Naive thymus-derived CD4-positive, alpha-beta T cell (primary cell): ENCODE measurements at regions of chr7 and their contacts with region 1.

Region 1: GRCh38 chr7:130961128-130961601 is 227.2 kb upstream of the KLF14 start:
- DNase-seq: peak; percentile 37 to 88 (median 79)
- ATAC-seq: peak; percentile 87
- H3K4me3 ChIP-seq: peak overlapping the region; percentile 65
- H3K4me3 Mint-ChIP-seq: peak overlapping the region; percentile 87 to 98 (median 90)
- H3K27ac ChIP-seq: peak overlapping the region; percentile 80
- H3K27ac Mint-ChIP-seq: peak overlapping the region in 8 of 9 donors; percentile 94 to 100 (median 97)
- H3K4me1 ChIP-seq: peaks cover 50 to 60% of the 10 kb centered on the region in 2 donors
- H3K4me1 Mint-ChIP-seq: peaks cover 53 to 76% (median 69%) of the 10 kb centered on the region in 7 donors
- H3K27me3 ChIP-seq: no peaks in the 10 kb centered on the region
- H3K27me3 Mint-ChIP-seq: no peaks in the 10 kb centered on the region

Region 2: DNA sequence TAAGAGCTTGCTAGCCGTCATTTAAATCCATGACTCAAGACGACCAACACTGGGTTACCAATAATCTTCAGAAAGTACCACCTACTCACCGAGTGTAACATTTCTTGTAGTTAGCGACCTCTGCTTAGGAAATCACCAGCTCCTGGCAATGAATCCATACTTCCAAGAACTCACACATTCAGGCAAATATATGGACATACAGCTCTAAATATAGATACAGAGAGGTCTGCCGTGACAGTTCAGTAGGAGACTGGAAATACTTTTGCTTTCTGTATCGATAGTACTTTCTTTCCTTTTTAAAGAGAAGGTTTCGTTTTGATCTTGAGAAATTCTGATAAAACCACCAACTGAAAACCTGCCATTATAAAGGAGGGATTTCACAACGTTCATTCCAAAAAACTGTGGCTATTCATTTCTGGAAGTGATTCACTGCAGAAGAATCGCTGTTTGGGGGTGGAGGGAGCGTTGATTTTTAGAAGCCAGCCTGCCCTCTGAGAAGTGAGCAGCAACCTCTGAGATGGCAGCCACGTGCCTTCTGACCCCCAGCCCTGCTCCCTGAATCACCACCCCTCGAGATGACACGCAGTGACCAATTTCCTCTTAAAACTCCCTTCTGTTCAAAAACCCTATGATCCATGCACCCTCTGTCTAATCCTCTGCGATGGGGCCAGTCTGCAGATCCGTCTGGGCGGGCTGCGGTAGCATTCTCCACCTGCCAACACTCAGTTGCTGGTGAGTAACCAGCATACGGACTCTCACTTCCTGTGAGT is 48.1 kb before region 1 on chr7:
- CTCF ChIA-PET with region 1: interaction called, 3 read pairs
- POLR2A ChIA-PET with region 1: interaction called, 7 read pairs
- intact Hi-C with region 1: loop called (anchors 1 kb)
- DNase-seq: peak; percentile 49 to 91 (median 75)
- ATAC-seq: peak; percentile 90
- H3K4me3 ChIP-seq: peak overlapping the region; percentile 66
- H3K4me3 Mint-ChIP-seq: peak overlapping the region; percentile 80 to 100 (median 94)
- H3K27ac ChIP-seq: peak overlapping the region; percentile 88
- H3K27ac Mint-ChIP-seq: peak overlapping the region; percentile 86 to 98 (median 95)
- H3K4me1 ChIP-seq: peaks cover 46 to 73% of the 10 kb centered on the region in 2 donors
- H3K4me1 Mint-ChIP-seq: peaks cover 53 to 93% (median 89%) of the 10 kb centered on the region in 7 donors
- H3K27me3 ChIP-seq: no peaks in the 10 kb centered on the region
- H3K27me3 Mint-ChIP-seq: no peaks in the 10 kb centered on the region

Region 3: GRCh38 chr7:130975731-130976130 is 14.6 kb after region 1 on chr7:
- CTCF ChIA-PET with region 1: interaction called, 3 read pairs
- POLR2A ChIA-PET with region 1: interaction called, 4 read pairs
- intact Hi-C with region 1: loop called (anchors 1 kb)
- DNase-seq: no peak
- ATAC-seq: no peak
- H3K4me3 ChIP-seq: no peak overlapping the region
- H3K4me3 Mint-ChIP-seq: peak overlapping the region in 4 of 10 donors; percentile 0 to 51 (median 32)
- H3K27ac ChIP-seq: no peak overlapping the region
- H3K27ac Mint-ChIP-seq: peak overlapping the region in 6 of 9 donors; percentile 24 to 80 (median 45)
- H3K4me1 ChIP-seq: peaks cover 3 to 21% of the 10 kb centered on the region in 2 donors
- H3K4me1 Mint-ChIP-seq: peaks cover 34 to 62% (median 52%) of the 10 kb centered on the region in 7 donors
- H3K27me3 ChIP-seq: no peaks in the 10 kb centered on the region
- H3K27me3 Mint-ChIP-seq: no peaks in the 10 kb centered on the region

Region 4: DNA sequence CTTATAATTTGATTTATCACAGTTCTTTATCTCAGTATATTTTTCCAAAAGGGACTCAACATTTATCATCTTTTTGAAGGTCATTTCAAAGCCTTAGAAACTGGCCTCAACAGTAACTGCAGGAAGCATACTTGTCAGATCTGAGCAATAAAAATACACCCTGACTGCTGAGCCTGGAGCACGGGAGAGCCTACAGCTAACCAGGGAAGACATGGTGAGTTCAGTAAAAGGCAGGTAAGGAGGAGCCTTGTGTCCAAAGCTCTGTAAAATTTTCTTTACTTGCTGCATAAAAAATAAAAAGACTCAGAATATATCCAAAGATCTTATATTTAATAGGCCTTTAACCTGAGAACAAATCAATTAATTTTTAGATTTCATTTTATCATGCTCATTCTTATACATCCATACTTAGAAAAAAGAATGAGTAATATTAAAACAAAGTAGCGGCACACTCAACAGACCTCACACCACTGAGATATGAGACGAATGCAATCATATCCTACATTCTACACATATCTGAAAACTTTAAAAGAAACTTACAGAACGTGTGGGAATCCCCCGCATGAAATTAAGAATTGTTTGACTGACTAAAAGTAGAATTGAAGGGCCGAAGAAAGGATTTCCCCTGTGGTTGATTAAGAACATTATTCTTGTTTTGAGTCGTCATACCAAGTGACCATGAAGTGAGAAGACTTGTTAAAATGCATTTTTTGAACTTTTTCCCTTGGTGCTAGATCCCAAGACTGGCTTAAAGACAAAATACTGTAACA is 70.1 kb after region 1 on chr7:
- CTCF ChIA-PET with region 1: no interaction called
- POLR2A ChIA-PET with region 1: no interaction called
- intact Hi-C with region 1: loop called in 1 of 2 experiments (anchors 2 kb)
- DNase-seq: no peak
- ATAC-seq: peak; percentile 33
- H3K4me3 ChIP-seq: no peak overlapping the region
- H3K4me3 Mint-ChIP-seq: peak overlapping the region; percentile 25 to 80 (median 69)
- H3K27ac ChIP-seq: no peak overlapping the region
- H3K27ac Mint-ChIP-seq: peak overlapping the region in 8 of 9 donors; percentile 24 to 86 (median 78)
- H3K4me1 ChIP-seq: peaks cover 45 to 53% of the 10 kb centered on the region in 2 donors
- H3K4me1 Mint-ChIP-seq: peaks cover 57 to 96% (median 94%) of the 10 kb centered on the region in 7 donors
- H3K27me3 ChIP-seq: no peaks in the 10 kb centered on the region
- H3K27me3 Mint-ChIP-seq: no peaks in the 10 kb centered on the region

Region 5: GRCh38 chr7:131100357-131101054 is 139.3 kb after region 1 on chr7:
- CTCF ChIA-PET with region 1: no interaction called
- POLR2A ChIA-PET with region 1: no interaction called
- intact Hi-C with region 1: no loop called
- DNase-seq: peak in 6 of 9 donors; percentile 37 to 67 (median 54)
- ATAC-seq: peak; percentile 54
- H3K4me3 ChIP-seq: peak overlapping the region; percentile 10
- H3K4me3 Mint-ChIP-seq: peak overlapping the region in 9 of 10 donors; percentile 52 to 88 (median 68)
- H3K27ac ChIP-seq: peak overlapping the region; percentile 66
- H3K27ac Mint-ChIP-seq: peak overlapping the region in 8 of 9 donors; percentile 58 to 90 (median 84)
- H3K4me1 ChIP-seq: peaks cover 61 to 93% of the 10 kb centered on the region in 2 donors
- H3K4me1 Mint-ChIP-seq: peaks cover 57 to 100% (median 93%) of the 10 kb centered on the region in 7 donors
- H3K27me3 ChIP-seq: no peaks in the 10 kb centered on the region
- H3K27me3 Mint-ChIP-seq: no peaks in the 10 kb centered on the region

Region 6: DNA sequence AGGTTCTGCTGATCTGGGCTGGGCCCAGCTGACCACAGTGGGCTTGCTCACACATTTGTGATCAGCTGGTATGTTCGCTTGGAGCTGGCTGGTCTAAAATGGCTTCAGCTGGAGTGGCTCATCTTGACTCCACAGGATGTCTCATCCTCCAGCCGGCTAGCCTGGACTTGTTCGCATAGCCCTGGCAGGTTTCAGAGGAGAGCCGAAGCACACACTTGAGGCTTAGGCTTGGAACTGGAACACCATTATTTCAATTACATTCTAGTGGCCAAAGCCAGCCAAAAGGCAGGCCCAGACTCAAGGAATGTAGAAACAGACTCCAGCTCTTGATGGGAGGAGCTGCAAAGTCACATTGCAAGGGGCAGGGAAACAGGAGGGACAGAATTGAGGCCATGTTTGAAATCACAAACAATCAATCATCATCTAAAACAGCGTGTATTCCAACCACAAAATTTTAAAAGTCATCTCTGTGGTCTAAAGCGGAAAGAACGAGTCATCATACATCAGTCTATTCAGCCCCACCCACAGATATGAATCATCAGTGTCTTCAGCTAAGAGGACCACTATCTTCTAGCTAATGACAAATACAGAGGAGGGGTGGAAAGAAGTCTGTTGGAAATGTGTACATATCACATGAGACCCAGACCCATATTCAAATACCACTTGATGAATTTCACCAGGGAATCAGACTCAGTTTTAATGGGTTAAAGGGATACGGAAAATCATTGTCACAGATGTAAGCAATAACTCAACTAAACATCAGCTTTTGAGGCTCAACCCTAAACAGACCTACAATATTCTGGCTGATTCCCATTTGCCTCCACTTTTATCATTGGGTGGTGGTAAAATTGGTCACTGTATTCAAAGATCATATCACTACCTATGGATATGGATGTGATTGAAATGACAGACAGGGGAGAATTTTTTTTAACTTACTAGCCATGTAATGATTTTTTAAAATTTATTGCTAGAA is 227.5 kb after region 1 on chr7:
- CTCF ChIA-PET with region 1: no interaction called
- POLR2A ChIA-PET with region 1: no interaction called
- intact Hi-C with region 1: loop called in 1 of 2 experiments (anchors 2 kb)
- DNase-seq: peak; percentile 5 to 62 (median 29)
- ATAC-seq: peak; percentile 95
- H3K4me3 ChIP-seq: no peak overlapping the region
- H3K4me3 Mint-ChIP-seq: peak overlapping the region in 2 of 10 donors; percentile 27 to 56
- H3K27ac ChIP-seq: no peak overlapping the region
- H3K27ac Mint-ChIP-seq: peak overlapping the region in 4 of 9 donors; percentile 15 to 86 (median 52)
- H3K4me1 ChIP-seq: peaks cover 15 to 28% of the 10 kb centered on the region in 2 donors
- H3K4me1 Mint-ChIP-seq: peaks cover 5 to 51% (median 16%) of the 10 kb centered on the region in 7 donors
- H3K27me3 ChIP-seq: no peaks in the 10 kb centered on the region
- H3K27me3 Mint-ChIP-seq: no peaks in the 10 kb centered on the region